Activated T-helper 1 cell treated with anti-CD3 and anti-CD28 coated beads, Interleukin-12 subunit alpha, Interleukin-12 subunit beta, Interleukin-2, Interleukin-4 antibody, amounts not matched to agents 30 ng/mL and 10 ng/mL and 1 ng/mL, durations not matched to agents 14 hours and 24 hours and 36 hours (primary cell): ENCODE measurements at regions of chr4 and their contacts with region 1.

Region 1: DNA sequence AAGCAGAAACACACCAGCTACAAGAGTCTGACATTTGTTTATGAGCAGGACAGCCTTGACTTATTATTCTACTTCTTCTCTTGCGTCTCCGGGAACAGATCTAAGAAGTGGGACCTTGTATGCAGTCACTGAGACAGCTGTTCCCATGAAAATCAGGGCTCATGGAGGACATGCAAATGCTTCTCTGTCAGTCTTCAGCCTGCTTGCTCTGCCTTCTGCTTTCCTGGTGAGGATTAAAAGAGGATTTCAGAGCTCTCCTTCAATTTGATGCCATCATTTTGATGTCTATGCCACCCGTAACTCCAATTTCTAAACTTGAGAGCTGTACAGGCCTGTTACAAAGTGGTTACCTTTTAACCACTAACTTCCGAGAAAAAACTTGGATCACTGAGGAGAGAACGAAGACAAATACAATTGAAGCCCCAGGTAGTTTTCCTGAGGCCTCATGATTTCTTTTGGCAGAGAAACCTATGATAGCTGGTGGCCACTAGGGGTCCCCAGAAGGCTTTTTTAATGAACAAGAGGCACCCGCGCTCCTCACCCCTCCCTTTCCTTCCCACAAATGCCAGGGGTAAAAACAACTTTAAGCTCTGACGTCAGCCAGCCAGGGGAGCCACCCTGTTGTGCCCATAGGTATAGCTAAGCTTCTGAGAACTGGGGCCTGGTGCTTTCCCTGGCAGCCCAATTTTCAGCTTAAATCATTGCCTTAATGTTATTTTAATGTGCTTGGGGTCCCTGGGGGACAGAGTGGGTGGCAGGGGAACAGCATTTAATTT is 97.0 kb downstream of the DDIT4L start:
- DNase-seq: peak; percentile 75
- H3K4me3 Mint-ChIP-seq: no peak overlapping the region
- H3K27ac Mint-ChIP-seq: peak overlapping the region; percentile 81
- H3K4me1 Mint-ChIP-seq: peaks cover 56% of the 10 kb centered on the region
- H3K27me3 Mint-ChIP-seq: no peaks in the 10 kb centered on the region

Region 2: DNA sequence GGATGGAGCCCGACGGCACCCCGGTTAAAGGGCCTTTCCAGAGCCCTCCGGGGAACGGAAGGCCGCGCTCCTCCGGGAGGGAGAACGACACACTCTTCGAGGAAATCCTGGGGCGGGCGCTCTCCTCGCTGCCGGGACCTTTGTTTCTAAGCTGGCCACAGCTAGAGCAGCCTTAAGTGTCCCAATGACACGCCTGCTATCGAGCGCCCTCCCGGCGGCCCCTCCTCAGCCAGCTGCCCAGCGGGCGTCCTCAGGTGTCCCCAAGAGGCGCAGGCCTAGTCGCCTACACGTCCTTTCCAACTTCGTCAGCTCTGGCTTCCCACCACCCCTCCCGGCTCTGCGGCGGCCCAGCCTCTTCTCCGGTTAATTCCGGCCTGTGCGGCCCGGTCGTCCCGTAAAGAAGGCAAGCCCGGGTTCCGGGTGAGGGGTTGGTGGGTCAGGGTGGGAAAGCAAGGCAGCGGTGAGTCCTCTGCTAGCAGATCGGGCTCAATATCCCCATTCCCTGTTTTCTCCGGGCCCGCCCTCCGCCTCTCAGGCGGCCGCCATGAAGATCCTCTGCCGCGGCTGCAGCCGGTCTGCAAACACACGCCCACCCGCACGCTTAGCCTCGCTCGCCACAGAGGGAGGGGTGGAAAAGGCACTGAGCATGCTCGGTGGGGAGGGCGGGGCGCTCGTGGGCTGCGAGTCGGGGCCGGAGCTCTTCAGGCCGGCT is 1832.5 kb before region 1 on chr4:
- intact Hi-C with region 1: loop called (anchors 10 kb)
- DNase-seq: peak; percentile 89
- H3K4me3 Mint-ChIP-seq: peak overlapping the region; percentile 96
- H3K27ac Mint-ChIP-seq: peak overlapping the region; percentile 97
- H3K4me1 Mint-ChIP-seq: peaks cover 55% of the 10 kb centered on the region
- H3K27me3 Mint-ChIP-seq: no peaks in the 10 kb centered on the region

Region 3: DNA sequence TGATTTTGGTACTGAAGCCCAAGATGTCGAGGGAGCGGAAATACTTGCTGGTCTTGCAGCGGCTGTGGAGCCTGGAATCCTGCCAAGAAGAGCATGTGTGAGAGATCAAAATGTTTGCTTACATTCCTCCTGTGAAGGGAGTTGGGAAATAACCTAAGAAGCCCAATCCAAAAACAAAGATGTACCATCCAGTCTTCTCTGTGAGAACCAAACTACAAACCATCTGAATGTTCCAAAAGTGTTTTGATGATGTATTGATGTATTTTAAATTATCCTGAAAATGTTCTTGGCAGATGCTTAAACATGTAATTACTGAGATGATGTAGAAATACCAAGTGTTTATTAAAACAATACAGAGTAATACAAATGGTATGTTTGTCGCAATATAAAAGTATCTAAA is 792.3 kb before region 1 on chr4:
- intact Hi-C with region 1: no loop called
- DNase-seq: no peak
- H3K4me3 Mint-ChIP-seq: no peak overlapping the region
- H3K27ac Mint-ChIP-seq: no peak overlapping the region
- H3K4me1 Mint-ChIP-seq: no peaks in the 10 kb centered on the region
- H3K27me3 Mint-ChIP-seq: no peaks in the 10 kb centered on the region

Region 4: GRCh38 chr4:99816545-99817308 is 276.6 kb before region 1 on chr4 and contains the start of gene DAPP1:
- intact Hi-C with region 1: no loop called
- DNase-seq: peak; percentile 79
- H3K4me3 Mint-ChIP-seq: peak within 1 kb of the TSS; percentile 92
- H3K27ac Mint-ChIP-seq: peak within 1 kb of the TSS; percentile 77
- H3K4me1 Mint-ChIP-seq: peaks cover 76% of the 10 kb centered on the region
- H3K27me3 Mint-ChIP-seq: no peaks in the 10 kb centered on the region
- total RNA-seq, gene DAPP1: 38.8 and 40.2 TPM in 2 replicates

Region 5: DNA sequence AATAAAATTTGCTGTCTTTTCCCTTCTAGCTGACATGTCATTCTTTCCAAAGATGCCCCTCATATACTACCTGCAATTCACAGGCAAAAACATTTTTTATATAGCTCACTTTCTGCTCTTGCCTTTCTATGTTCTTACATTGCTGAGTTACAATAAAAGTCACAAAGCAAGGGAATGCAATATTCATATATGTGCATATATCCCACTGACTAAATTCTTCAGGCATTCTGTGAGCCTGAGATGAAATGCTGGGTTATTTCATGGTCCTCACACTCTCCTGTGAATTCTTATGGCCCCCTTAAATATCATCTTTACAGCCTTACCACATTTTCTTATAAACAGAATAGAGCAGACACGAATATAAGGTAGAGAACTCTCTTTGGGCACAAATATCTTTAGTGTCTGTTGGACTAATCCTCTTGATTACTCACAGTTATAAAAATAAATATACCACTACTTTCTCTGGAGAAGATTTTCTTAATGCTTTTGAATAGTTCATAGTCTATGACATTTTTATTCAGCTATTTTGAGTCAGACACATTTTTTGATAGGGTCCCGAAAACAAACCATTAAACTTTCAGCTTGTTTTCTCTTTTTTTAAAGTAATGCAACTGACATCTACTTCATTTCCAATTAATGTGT is 59.1 kb before region 1 on chr4:
- intact Hi-C with region 1: no loop called
- DNase-seq: no peak
- H3K4me3 Mint-ChIP-seq: no peak overlapping the region
- H3K27ac Mint-ChIP-seq: no peak overlapping the region
- H3K4me1 Mint-ChIP-seq: no peaks in the 10 kb centered on the region
- H3K27me3 Mint-ChIP-seq: no peaks in the 10 kb centered on the region

Region 6: DNA sequence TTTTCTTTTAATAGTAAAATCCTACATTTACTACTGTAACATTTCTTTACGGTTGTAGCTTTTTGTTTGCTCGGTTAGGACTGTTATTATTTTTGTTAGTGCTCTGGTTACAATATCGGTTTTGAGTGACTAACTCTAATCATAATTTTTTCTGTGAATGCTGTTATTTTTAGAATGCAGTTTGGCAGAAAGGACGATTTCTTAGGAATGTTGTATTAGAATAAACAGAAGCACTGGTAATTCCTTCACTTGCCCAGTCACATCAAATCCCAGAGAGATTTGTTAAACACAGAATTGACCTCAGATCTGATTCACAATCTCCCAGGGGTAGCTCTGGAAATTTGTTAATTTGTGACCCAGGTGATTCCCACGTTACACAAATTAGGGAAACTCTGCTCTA is 75.2 kb after region 1 on chr4:
- intact Hi-C with region 1: loop called (anchors 5 kb)
- DNase-seq: no peak
- H3K4me3 Mint-ChIP-seq: no peak overlapping the region
- H3K27ac Mint-ChIP-seq: no peak overlapping the region
- H3K4me1 Mint-ChIP-seq: peaks cover 49% of the 10 kb centered on the region
- H3K27me3 Mint-ChIP-seq: no peaks in the 10 kb centered on the region

Region 7: GRCh38 chr4:100742045-100742444 is 648.8 kb after region 1 on chr4:
- intact Hi-C with region 1: loop called (anchors 1 kb)
- DNase-seq: no peak
- H3K4me3 Mint-ChIP-seq: no peak overlapping the region
- H3K27ac Mint-ChIP-seq: no peak overlapping the region
- H3K4me1 Mint-ChIP-seq: no peaks in the 10 kb centered on the region
- H3K27me3 Mint-ChIP-seq: peaks cover 4% of the 10 kb centered on the region

Region 8: DNA sequence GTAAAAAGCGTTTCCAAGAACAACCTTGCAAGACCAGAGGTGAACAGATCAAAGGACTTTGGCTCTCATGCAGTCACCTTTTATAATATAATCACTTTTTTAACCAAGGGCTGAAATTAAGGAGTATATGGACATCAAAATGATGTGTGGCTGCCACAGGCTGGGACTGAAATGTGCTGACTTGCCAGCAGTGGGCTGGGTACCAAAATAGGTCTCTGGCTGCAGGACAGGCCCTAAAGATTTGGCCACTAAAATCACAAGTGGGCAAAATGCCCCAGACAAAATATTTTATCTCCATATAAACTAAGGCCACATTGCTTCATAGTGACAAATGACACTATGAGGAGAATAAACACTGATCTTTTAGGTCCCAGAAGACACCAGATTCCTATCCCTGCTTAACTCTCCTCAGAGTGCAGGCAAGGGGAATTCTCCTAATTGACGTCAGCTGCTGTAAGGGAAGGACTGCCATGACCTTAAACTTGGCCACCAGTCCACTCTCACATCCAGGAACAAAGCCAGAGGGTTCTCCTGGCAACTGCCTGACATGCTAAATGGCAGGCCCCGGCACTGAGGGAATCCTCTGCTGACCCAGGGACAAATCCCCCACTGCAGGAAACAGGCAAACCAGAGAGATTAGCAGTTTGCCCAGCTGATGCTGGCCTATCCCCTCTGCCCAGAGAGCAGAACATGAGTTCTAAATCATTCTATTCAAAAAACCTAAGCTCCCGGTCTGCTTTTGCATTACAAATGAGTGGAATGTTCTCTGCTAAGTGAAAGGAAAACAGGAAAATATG is 1098.2 kb after region 1 on chr4:
- intact Hi-C with region 1: loop called (anchors 5 kb)
- DNase-seq: no peak
- H3K4me3 Mint-ChIP-seq: no peak overlapping the region
- H3K27ac Mint-ChIP-seq: no peak overlapping the region
- H3K4me1 Mint-ChIP-seq: peaks cover 7% of the 10 kb centered on the region
- H3K27me3 Mint-ChIP-seq: no peaks in the 10 kb centered on the region

Region 9: DNA sequence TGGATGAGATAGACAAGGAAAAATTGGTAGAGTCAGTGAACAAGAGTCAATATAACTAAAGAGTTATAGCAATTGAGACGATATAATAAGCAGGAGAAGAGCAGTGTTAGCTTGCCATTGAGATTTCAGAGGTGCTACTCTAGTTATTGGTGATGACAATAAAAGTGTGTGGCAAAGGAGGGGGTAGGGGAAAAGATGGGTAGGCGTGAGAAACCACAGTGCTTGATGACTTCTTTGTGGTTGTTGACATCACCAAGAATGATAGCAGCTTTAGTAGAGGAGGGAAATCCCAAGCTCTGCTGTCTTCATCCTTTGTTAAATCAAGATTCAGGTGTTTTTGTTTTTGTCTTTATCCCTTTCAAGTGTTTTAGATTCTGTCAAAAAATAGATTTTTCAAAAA is 1433.9 kb after region 1 on chr4:
- intact Hi-C with region 1: loop called (anchors 5 kb)
- DNase-seq: peak; percentile 68
- H3K4me3 Mint-ChIP-seq: peak overlapping the region; percentile 8
- H3K27ac Mint-ChIP-seq: peak overlapping the region; percentile 67
- H3K4me1 Mint-ChIP-seq: peaks cover 32% of the 10 kb centered on the region
- H3K27me3 Mint-ChIP-seq: peaks cover 26% of the 10 kb centered on the region